Prostate gland (tissue), 2 donors: ENCODE measurements at regions of chr16 and their contacts with region 1.

Region 1: DNA sequence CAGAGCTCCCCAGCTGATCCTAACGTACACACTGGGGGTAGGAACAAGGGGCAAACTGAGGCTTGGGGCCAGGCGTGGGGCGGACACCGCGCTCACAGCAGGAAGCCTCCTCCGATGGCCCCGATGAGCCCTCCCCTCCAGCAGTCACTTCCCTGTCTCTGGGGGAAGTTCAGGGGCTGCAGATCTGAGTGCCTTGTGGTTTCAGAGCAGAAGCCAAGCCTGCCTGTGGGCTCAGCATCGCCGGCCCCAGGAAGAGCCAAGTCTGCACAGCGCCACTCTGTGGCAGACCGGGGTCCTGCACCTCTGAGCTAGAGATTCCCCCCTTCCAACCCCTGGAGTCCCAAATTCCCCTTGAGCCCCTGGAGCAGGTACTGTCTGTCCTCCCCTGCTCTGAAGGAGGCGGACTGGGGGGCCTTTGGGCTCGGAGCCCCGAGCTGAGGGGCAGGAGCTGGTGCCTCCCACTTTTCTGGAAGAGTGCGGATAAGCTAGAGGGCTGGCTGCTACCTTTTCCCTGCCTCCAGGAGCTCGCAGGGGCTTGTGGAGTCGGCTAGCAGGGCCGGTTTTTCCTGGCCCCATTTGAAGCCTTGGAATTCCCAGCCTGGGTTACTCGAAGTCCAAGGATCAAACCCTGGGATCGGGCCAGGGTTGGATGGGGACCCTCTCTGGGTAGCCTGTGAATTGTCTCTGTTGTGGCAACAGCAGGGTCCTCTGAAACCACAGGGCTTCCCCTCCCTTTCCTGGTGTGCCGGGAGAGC is 2.9 kb downstream of the GSE1 start:
- DNase-seq: no peak
- H3K4me3 ChIP-seq: peak overlapping the region in 1 of 2 donors; percentile 68
- H3K27ac ChIP-seq: peak overlapping the region; percentile 95
- H3K4me1 ChIP-seq: peaks cover 31% of the 10 kb centered on the region
- H3K27me3 ChIP-seq: no peaks in the 10 kb centered on the region
- CTCF ChIP-seq: peak; percentile 82 to 92 (median 85)
- POLR2A ChIP-seq: no peak

Region 2: DNA sequence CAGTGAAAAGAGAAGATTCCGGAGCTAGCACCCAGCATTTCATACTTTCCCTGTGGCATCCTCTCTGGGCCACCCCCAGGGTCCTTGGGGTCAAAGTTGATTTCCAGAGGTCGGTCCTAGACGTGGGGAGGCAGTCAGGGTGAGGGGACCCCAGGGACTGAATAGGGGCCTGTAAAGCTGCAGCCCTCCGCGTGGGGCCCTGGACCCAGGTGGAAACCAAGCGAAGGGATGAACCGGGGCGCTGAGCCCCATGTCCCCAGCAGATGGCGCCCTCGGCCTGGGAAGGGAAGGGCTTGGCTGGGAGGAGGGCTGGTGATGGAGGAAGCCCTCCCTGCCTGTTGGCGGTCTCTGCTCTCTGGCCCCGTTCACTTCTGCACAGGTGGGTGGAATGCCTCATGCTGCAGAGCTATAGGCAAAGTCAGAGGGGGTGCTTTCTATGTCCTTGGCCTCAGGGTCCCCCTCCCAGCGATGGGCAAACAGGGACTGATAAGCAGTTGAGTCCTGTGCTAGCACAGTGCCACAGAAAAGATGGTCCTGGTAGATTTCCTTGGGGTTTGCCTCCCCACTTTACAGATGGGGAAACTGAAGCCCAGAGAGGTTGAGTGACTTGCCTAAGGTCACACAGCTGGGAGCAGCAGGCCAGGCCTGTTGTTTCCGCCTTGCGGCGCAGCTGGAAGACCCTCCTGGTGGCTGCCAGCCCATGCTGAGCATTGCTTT is 340.3 kb before region 1 on chr16:
- intact Hi-C with region 1: loop called (anchors 5 kb)
- DNase-seq: peak; percentile 48
- H3K4me3 ChIP-seq: no peak overlapping the region
- H3K27ac ChIP-seq: no peak overlapping the region
- H3K4me1 ChIP-seq: no peaks in the 10 kb centered on the region
- H3K27me3 ChIP-seq: no peaks in the 10 kb centered on the region
- CTCF ChIP-seq: peak; percentile 76 to 93 (median 84)
- POLR2A ChIP-seq: no peak

Region 3: DNA sequence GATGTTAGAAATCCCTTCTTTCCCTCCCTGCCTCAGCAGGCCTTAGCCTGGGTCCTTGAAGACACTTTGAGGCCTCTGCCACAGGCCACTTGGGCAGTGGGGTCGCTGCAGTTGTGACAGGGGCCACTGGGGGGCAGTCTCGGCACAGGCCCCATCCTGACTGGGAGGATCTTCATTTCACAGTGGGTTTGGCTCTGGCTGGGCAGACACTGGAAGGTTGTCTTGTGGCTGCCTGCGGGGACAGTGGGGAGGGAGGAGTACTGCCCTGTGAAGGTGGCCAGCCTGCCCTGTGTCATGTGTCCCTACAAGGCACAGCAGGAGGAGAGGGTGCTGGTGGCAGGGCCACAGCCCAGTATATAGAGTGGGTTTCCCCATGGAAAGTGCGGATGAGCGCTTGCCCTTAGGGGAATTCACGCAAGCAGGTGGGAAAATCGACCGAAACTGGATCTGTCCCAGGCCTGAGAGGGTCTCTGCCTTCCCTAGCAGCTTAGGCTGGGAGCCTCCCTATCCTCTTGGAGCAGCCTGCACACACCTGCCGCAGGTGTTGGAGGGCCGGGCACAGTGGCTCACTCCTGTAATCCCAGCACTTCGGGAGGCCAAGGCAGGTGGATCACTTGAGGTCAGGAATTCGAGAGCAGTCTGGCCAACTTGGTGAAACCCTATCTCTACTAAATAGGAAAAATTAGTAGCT is 43.9 kb after region 1 on chr16:
- intact Hi-C with region 1: no loop called
- DNase-seq: peak; percentile 73
- H3K4me3 ChIP-seq: no peak overlapping the region
- H3K27ac ChIP-seq: peak overlapping the region; percentile 48 to 50
- H3K4me1 ChIP-seq: peaks cover 11% of the 10 kb centered on the region
- H3K27me3 ChIP-seq: no peaks in the 10 kb centered on the region
- CTCF ChIP-seq: peak; percentile 81 to 94 (median 89)
- POLR2A ChIP-seq: no peak